ENCODE measurements at regions of chrX and their contacts with region 1.

Region 1: GRCh38 chrX:18210470-18210869 is 10.2 kb downstream of the BEND2 start:
- DNase-seq: peak; percentile 33
- H3K4me3 ChIP-seq: no peak overlapping the region
- H3K27ac ChIP-seq: no peak overlapping the region
- H3K4me1 ChIP-seq: no peaks in the 10 kb centered on the region
- H3K27me3 ChIP-seq: no peaks in the 10 kb centered on the region
- CTCF ChIP-seq: peak; percentile 46; the same call in 1 of the 2 replicates

Region 2: DNA sequence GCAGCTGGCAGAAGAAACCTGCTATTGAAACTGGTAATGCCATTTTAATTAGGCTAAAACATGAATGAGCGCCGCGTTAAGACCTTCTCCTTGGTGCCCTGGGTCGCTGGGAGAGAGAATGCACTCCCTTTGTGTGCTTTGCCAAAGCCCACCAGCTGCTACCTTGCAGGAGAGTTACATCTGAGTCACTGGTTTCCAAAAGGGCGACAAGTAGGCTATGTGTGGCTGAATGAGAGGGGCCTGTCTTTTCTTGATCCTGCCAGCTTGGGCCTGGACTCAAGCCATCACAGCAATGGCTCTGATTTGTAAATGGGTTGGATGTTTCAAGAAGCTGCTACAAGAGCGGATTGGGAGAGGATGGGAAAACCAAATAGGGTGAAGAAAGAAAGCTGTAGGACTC is 753.9 kb before region 1 on chrX:
- CTCF ChIA-PET with region 1: no interaction called
- POLR2A ChIA-PET with region 1: no interaction called
- intact Hi-C with region 1: no loop called
- DNase-seq: no peak
- H3K4me3 ChIP-seq: no peak overlapping the region
- H3K27ac ChIP-seq: no peak overlapping the region
- H3K4me1 ChIP-seq: no peaks in the 10 kb centered on the region
- H3K27me3 ChIP-seq: no peaks in the 10 kb centered on the region
- CTCF ChIP-seq: no peak

Region 3: DNA sequence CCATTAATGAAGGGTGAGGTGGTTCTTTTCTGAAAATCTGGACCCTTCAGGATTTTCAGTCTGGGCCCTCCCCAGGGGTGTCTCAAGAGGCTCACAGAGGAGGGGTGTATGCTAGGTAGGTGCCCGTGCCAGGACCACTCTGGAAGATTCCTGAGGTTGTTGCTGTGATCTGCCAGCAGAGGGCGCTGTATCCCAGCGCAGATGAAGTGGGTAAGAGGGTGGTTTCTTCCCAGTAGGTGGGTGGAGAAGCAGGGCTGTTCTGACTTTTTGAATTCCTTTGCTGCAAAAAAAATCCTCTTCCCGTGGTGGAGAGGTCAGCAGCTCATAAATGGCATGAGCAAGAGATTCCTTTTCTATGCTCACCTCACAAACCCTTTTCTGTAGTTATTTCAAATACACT is 422.0 kb before region 1 on chrX:
- CTCF ChIA-PET with region 1: no interaction called
- POLR2A ChIA-PET with region 1: no interaction called
- intact Hi-C with region 1: loop called (anchors 5 kb)
- DNase-seq: peak; percentile 61
- H3K4me3 ChIP-seq: no peak overlapping the region
- H3K27ac ChIP-seq: no peak overlapping the region
- H3K4me1 ChIP-seq: no peaks in the 10 kb centered on the region
- H3K27me3 ChIP-seq: no peaks in the 10 kb centered on the region
- CTCF ChIP-seq: peak; percentile 89

Region 4: DNA sequence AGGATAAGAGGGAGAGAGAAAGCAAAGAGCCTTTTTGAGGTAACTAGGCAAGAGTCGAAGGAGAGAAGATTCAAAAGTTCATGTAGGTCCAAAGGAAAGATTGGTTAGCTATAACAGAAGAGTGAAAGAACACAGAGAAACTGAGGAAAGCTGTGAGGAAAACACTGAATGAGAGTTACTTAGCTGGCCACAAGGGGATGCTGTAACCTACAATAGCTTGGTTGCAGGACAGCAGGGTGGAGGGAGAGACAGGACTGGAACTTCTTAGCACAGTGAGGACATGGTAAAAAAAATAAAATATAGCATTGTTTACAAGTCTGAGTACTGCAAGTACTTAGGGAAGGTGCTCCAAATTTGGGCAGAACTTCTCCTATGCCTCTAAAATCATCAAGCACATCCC is 397.7 kb before region 1 on chrX:
- CTCF ChIA-PET with region 1: no interaction called
- POLR2A ChIA-PET with region 1: no interaction called
- intact Hi-C with region 1: loop called (anchors 5 kb)
- DNase-seq: peak; percentile 18
- H3K4me3 ChIP-seq: no peak overlapping the region
- H3K27ac ChIP-seq: no peak overlapping the region
- H3K4me1 ChIP-seq: no peaks in the 10 kb centered on the region
- H3K27me3 ChIP-seq: no peaks in the 10 kb centered on the region
- CTCF ChIP-seq: peak; percentile 66

Region 5: GRCh38 chrX:17930850-17931249 is 279.6 kb before region 1 on chrX:
- CTCF ChIA-PET with region 1: no interaction called
- POLR2A ChIA-PET with region 1: no interaction called
- intact Hi-C with region 1: loop called (anchors 2 kb)
- DNase-seq: peak; percentile 7
- H3K4me3 ChIP-seq: no peak overlapping the region
- H3K27ac ChIP-seq: no peak overlapping the region
- H3K4me1 ChIP-seq: no peaks in the 10 kb centered on the region
- H3K27me3 ChIP-seq: no peaks in the 10 kb centered on the region
- CTCF ChIP-seq: peak; percentile 24; the same call in 1 of the 2 replicates

Region 6: GRCh38 chrX:17944833-17945497 is 265.5 kb before region 1 on chrX:
- CTCF ChIA-PET with region 1: interaction called, 5 read pairs
- POLR2A ChIA-PET with region 1: no interaction called
- intact Hi-C with region 1: loop called (anchors 1 kb)
- DNase-seq: peak; percentile 57
- H3K4me3 ChIP-seq: no peak overlapping the region
- H3K27ac ChIP-seq: no peak overlapping the region
- H3K4me1 ChIP-seq: no peaks in the 10 kb centered on the region
- H3K27me3 ChIP-seq: no peaks in the 10 kb centered on the region
- CTCF ChIP-seq: peak; percentile 82

Region 7: DNA sequence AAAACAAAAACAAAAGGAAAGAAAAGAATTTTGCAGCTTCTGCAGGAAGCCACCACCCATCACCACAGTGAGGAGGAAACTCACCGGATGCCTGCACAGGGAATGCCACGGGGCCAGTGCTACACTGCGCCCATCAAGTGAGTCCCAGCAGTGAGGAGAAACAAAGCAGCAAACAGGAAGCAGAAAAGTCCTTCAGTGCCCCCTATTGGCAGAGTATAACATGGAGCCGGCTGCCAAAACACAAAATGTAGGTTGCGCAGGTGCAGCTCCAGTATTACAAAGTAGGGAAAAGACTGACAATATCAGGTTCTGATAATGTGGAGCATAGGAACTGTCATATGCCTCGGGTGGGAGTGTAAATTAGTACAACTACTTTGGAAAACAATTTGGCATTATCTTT is 167.3 kb after region 1 on chrX:
- CTCF ChIA-PET with region 1: no interaction called
- POLR2A ChIA-PET with region 1: no interaction called
- intact Hi-C with region 1: loop called (anchors 10 kb)
- DNase-seq: peak; percentile 65
- H3K4me3 ChIP-seq: no peak overlapping the region
- H3K27ac ChIP-seq: no peak overlapping the region
- H3K4me1 ChIP-seq: no peaks in the 10 kb centered on the region
- H3K27me3 ChIP-seq: no peaks in the 10 kb centered on the region
- CTCF ChIP-seq: peak; percentile 78

Measured in A673 (cell line).